Aorta (tissue), 5 donors: ENCODE measurements at regions of chr1 and their contacts with region 1.

Region 1: GRCh38 chr1:115107516-115108260 is 18.4 kb upstream of the TSPAN2 start:
- DNase-seq: no peak
- ATAC-seq: peak; percentile 69
- H3K4me3 ChIP-seq: no peak overlapping the region
- H3K27ac ChIP-seq: no peak overlapping the region
- H3K4me1 ChIP-seq: no peaks in the 10 kb centered on the region
- H3K27me3 ChIP-seq: no peaks in the 10 kb centered on the region

Region 2: DNA sequence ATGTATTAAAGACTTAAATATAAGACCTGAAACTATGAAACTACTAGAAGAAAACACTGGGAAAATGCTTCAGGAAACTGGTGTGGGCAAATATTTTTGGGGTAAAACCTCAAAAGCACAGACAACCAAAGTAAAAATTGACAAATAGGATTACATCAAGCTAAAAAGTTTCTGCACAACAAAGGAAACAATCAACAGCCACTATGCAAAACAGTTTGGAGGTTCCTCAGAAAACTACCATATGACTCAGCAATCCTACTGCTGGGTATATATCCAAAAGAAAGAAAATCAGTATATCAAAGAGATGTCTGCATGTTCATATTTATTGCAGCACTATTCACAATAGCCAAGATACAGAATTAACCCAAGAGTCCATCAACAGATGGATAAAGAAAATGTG is 60.9 kb before region 1 on chr1:
- intact Hi-C with region 1: loop called (anchors 5 kb)
- DNase-seq: no peak
- ATAC-seq: no peak
- H3K4me3 ChIP-seq: no peak overlapping the region
- H3K27ac ChIP-seq: no peak overlapping the region
- H3K4me1 ChIP-seq: no peaks in the 10 kb centered on the region
- H3K27me3 ChIP-seq: no peaks in the 10 kb centered on the region

Region 3: DNA sequence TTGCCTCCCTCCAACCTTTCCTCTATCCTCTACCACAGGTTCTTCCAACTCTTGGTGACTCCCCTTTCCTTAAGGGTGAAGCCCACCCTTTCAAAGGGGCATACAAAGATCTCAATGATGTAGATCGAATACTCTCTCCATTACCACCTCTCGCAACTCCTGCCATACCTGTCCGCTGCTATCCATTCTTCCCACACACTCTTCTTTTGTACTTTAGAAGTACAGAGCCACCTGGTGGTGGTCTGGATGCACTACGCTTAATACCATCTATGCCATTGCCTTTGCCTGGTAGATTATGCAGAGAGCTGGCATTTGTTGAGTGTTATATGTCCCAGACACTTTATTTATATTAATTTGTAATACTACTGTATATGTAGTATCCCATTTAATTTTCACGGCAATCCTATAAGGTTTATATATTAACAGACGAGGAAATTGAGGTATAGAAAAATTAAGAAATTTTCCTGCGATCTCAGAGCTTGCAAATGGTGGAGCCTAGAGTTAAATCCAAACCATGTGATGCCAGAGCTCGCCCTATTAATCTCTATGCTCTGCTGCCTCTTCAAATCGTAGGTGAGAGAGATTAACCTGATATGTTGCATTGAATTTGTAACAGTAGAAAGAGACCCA is 55.1 kb before region 1 on chr1:
- intact Hi-C with region 1: loop called (anchors 5 kb)
- DNase-seq: peak in 1 of 2 donors; percentile 62
- ATAC-seq: peak; percentile 73
- H3K4me3 ChIP-seq: no peak overlapping the region
- H3K27ac ChIP-seq: no peak overlapping the region
- H3K4me1 ChIP-seq: no peaks in the 10 kb centered on the region
- H3K27me3 ChIP-seq: no peaks in the 10 kb centered on the region

Region 4: DNA sequence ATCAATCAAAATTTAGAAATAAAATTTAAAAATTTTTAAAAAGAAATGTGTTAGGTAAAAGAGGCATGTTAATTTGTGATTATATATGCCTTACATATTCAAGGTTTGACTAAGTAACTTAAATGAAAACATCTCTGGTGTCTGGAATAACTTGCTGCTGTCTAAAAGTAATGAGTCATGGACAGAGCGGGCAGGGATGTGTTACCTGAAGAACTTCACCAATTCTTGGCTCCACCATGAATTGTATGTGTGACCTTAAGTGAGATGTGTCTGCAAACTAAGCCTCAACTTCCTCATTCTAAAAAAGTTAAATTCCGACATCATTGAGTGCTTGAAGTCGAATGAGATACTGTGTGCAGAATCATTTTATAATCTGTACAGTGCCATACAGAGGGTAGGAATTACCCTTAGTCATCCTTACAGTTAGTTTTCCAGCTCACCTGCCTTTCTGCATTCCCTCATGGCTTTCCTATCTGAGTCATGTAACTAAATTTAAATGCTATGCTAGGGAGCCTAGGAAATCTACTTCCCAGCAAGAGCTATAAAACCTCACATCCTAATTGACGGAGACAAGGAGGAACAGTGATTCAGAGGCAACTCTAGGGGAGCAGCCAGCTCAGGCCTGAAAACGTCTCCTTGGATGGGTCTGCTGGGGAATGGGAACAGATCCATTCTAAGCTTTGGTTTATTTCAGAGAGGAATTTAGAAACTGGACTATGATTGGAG is 82.3 kb after region 1 on chr1:
- intact Hi-C with region 1: no loop called
- DNase-seq: no peak
- ATAC-seq: peak; percentile 78
- H3K4me3 ChIP-seq: no peak overlapping the region
- H3K27ac ChIP-seq: peak overlapping the region; percentile 61 to 77
- H3K4me1 ChIP-seq: peaks cover 0 to 6% of the 10 kb centered on the region in 2 donors
- H3K27me3 ChIP-seq: no peaks in the 10 kb centered on the region